PC-9 (cell line): ENCODE measurements at regions of chr12 and their contacts with region 1.

Region 1: GRCh38 chr12:17169726-17170471 is 563.9 kb upstream of the LMO3 start:
- DNase-seq: no peak
- H3K4me3 ChIP-seq: no peak overlapping the region
- H3K27ac ChIP-seq: no peak overlapping the region
- H3K4me1 ChIP-seq: no peaks in the 10 kb centered on the region
- H3K27me3 ChIP-seq: no peaks in the 10 kb centered on the region
- CTCF ChIP-seq: no peak

Region 2: DNA sequence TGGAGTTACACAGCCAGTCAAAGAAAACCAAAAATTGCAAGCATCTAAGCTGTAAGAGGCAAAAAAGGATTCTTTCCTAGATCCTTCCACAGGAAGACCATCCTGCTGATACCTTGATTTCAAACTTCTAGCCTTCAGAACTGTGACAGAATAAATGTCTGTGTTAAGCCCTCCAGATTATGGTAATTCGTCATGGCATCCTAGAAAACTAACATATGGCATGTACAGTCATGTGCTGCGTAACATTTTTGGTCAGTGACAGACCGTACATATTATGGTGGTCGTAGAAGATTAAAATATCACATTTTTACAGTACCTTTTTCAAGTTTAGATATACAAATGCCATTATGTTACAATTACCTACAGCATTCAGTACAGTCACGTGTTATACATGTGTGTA is 97.0 kb after region 1 on chr12:
- CTCF ChIA-PET with region 1: no interaction called
- POLR2A ChIA-PET with region 1: interaction called, 12 read pairs
- intact Hi-C with region 1: no loop called
- DNase-seq: no peak
- H3K4me3 ChIP-seq: no peak overlapping the region
- H3K27ac ChIP-seq: no peak overlapping the region
- H3K4me1 ChIP-seq: no peaks in the 10 kb centered on the region
- H3K27me3 ChIP-seq: no peaks in the 10 kb centered on the region
- CTCF ChIP-seq: no peak

Region 3: DNA sequence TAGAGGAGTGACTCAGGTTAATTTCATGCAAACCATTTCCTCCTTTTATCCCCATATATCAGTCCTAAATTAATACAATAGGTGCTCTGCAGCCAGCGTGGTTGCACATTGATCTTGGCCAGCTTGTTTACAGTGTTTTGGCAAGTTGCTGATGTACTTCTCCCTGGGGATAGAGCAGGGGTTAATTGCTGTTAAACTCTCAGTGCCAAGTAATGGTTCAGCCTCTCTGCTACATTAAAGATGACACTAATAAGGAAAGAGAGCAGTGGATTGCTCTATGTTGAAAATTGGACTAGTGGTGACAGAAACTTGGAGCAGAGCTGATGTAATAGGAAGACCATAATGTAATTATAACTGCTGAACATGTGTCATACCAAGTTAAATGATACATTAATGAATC is 202.6 kb after region 1 on chr12:
- CTCF ChIA-PET with region 1: no interaction called
- POLR2A ChIA-PET with region 1: no interaction called
- intact Hi-C with region 1: no loop called
- DNase-seq: no peak
- H3K4me3 ChIP-seq: no peak overlapping the region
- H3K27ac ChIP-seq: no peak overlapping the region
- H3K4me1 ChIP-seq: no peaks in the 10 kb centered on the region
- H3K27me3 ChIP-seq: no peaks in the 10 kb centered on the region
- CTCF ChIP-seq: no peak

Region 4: DNA sequence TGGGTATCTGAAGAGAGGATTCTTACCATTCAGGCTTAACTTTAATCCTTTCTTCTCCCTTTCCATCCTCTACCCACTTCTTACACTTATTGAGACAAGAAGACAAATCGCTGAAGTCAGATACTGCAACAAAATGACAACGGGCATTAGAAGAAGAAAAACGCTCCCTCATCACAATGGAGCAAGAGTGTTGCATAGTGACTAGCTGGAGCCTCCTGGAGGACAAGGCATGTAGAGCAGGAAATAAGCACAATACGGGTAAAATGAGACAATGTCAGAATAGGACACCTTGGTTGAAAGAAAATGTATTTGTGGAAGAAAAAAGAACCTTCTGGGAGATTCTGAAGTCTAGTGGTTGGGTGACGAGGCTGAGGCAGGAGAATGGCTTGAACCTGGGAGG is 419.1 kb after region 1 on chr12:
- CTCF ChIA-PET with region 1: no interaction called
- POLR2A ChIA-PET with region 1: no interaction called
- intact Hi-C with region 1: loop called (anchors 10 kb)
- DNase-seq: peak in 1 of 2 experiments; percentile 17
- H3K4me3 ChIP-seq: no peak overlapping the region
- H3K27ac ChIP-seq: no peak overlapping the region
- H3K4me1 ChIP-seq: no peaks in the 10 kb centered on the region
- H3K27me3 ChIP-seq: no peaks in the 10 kb centered on the region
- CTCF ChIP-seq: peak; percentile 55